Mammary epithelial cell (primary cell): ENCODE measurements at regions of chr15 and their contacts with region 1.

Region 1: GRCh38 chr15:80804965-80805495 is 25.9 kb downstream of the CEMIP start:
- DNase-seq: no peak
- H3K4me3 ChIP-seq: no peak overlapping the region
- H3K27ac ChIP-seq: no peak overlapping the region
- H3K4me1 ChIP-seq: no peaks in the 10 kb centered on the region
- H3K27me3 ChIP-seq: no peaks in the 10 kb centered on the region
- CTCF ChIP-seq: no peak

Region 2: GRCh38 chr15:80730926-80731325 is 74.1 kb before region 1 on chr15:
- CTCF ChIA-PET with region 1: no interaction called
- dilution Hi-C with region 1: loop called (anchors 5 kb)
- in situ Hi-C with region 1: no loop called
- intact Hi-C with region 1: no loop called
- DNase-seq: no peak
- H3K4me3 ChIP-seq: no peak overlapping the region
- H3K27ac ChIP-seq: no peak overlapping the region
- H3K4me1 ChIP-seq: no peaks in the 10 kb centered on the region
- H3K27me3 ChIP-seq: no peaks in the 10 kb centered on the region
- CTCF ChIP-seq: no peak

Region 3: GRCh38 chr15:80957556-80957955 is 152.5 kb after region 1 on chr15:
- CTCF ChIA-PET with region 1: no interaction called
- dilution Hi-C with region 1: no loop called
- in situ Hi-C with region 1: no loop called
- intact Hi-C with region 1: no loop called
- DNase-seq: no peak
- H3K4me3 ChIP-seq: no peak overlapping the region
- H3K27ac ChIP-seq: no peak overlapping the region
- H3K4me1 ChIP-seq: peaks cover 19% of the 10 kb centered on the region
- H3K27me3 ChIP-seq: no peaks in the 10 kb centered on the region
- CTCF ChIP-seq: no peak

Region 4: GRCh38 chr15:81274931-81275707 is 470.1 kb after region 1 on chr15:
- CTCF ChIA-PET with region 1: no interaction called
- dilution Hi-C with region 1: no loop called
- in situ Hi-C with region 1: no loop called
- intact Hi-C with region 1: no loop called
- DNase-seq: peak; percentile 54
- H3K4me3 ChIP-seq: no peak overlapping the region
- H3K27ac ChIP-seq: no peak overlapping the region
- H3K4me1 ChIP-seq: no peaks in the 10 kb centered on the region
- H3K27me3 ChIP-seq: no peaks in the 10 kb centered on the region
- CTCF ChIP-seq: peak; percentile 93 to 94